ENCODE measurements at regions of chr12 and their contacts with region 1.

Region 1: DNA sequence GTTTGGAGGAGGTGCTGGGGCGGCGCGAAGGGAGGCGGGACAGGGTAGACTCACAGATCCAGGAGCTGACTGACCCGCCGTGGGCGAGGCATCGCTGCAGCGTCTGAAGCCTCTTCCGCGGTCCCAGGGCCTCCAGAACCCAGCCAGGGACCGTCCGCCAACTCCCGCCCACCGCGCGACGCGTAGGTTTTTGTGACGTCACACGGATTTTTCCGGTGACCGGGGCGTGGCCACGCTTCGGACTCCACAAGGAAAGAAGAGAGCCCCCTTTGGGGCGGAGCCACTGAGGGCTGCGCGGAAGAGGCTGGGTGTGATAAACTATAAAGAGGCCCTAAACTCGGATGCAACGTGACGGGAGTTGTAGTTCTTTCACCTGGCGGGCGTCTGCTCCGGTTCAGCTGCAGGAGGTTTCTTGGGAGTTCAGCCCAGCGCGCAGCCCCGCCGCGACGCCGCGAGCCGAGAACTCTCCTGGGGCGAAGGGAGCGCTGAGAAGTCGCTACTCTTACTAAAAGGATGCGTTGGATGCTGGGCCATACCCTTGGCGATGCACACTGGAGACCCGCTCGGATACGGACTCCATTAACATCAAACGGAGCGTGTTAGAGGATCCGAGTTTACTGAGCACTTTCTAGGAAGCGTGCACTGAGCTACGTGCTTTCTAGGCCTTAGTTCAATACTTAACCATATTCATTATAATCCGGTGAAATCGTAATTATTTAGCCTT is at the start of gene AMN1:
- DNase-seq: peak; percentile 99
- ATAC-seq: peak; percentile 97 to 99 (median 98)
- H3K4me3 ChIP-seq: peak within 1 kb of the TSS; percentile 46 to 69 (median 63)
- H3K27ac ChIP-seq: peak within 1 kb of the TSS; percentile 92 to 99 (median 96)
- H3K4me1 ChIP-seq: peaks cover 0 to 80% (median 41%) of the 10 kb centered on the region in 9 donors
- H3K27me3 ChIP-seq: no peaks in the 10 kb centered on the region
- CTCF ChIP-seq: peak in 5 of 9 donors; percentile 3 to 28 (median 19)
- total RNA-seq, gene AMN1: 12.7 to 24.9 (median 14.6) TPM

Region 2: DNA sequence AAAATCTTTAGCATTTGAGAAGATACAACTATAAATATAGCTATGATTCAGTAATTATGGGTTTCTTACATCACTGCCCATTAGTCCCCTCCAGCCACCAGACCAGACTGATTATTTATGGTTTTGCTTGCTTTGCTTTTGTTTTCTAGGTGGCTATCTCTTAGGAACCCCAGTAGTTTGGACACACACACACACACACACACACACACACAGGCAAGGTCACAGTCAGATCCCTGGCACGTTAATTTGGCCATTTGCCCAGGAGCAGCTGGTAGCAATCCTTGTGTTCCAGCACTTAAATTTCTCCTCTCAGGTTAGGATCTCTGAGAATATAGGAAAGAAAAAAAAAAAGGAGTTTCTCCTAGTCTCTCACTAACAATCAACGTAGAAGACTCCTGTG is 139.9 kb after region 1 on chr12:
- intact Hi-C with region 1: loop called in 2 of 10 experiments (anchors 2 to 5 kb)
- DNase-seq: peak; percentile 36 to 69
- ATAC-seq: peak in 6 of 8 donors; percentile 45 to 75 (median 64)
- H3K4me3 ChIP-seq: no peak overlapping the region
- H3K27ac ChIP-seq: no peak overlapping the region
- H3K4me1 ChIP-seq: peaks cover 0 to 6% (median 2%) of the 10 kb centered on the region in 9 donors
- H3K27me3 ChIP-seq: no peaks in the 10 kb centered on the region
- CTCF ChIP-seq: no peak

Region 3: DNA sequence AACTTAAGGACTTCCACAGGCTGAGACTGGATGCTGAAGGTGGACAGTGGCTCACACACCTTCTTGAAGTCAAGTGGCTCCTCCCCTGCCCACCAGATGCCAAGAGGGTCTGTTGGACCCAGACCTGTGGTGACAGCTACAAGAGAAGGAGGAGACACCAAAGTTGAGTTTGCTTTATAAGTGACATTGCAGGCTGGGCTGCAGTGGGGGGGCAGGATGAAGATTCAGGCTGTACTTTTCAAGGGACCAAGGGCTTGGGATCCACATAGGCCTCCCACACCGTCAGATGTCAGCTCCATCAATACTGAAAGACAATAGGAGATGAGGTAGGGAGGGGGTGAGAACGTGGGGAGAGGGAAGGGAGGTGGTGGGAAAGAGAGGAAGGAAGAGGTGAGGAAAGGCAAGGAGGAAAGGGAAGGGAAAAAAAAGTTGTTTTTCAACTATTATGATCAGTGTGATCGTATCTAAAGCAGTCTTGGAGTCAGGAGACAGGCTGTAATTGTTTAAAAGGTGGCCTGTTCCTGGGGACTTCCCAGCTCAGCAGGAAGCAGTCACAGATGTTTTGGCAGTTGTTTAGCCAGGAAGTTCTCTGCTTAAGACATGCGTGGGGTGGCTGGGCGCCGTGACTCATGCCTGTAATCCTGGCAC is 146.0 kb after region 1 on chr12:
- intact Hi-C with region 1: loop called in 1 of 10 experiments (anchors 2 kb)
- DNase-seq: peak; percentile 41 to 69
- ATAC-seq: peak; percentile 84 to 96 (median 92)
- H3K4me3 ChIP-seq: no peak overlapping the region
- H3K27ac ChIP-seq: peak overlapping the region; percentile 32 to 88 (median 74)
- H3K4me1 ChIP-seq: peaks cover 0 to 36% (median 17%) of the 10 kb centered on the region in 9 donors
- H3K27me3 ChIP-seq: no peaks in the 10 kb centered on the region
- CTCF ChIP-seq: no peak

Region 4: DNA sequence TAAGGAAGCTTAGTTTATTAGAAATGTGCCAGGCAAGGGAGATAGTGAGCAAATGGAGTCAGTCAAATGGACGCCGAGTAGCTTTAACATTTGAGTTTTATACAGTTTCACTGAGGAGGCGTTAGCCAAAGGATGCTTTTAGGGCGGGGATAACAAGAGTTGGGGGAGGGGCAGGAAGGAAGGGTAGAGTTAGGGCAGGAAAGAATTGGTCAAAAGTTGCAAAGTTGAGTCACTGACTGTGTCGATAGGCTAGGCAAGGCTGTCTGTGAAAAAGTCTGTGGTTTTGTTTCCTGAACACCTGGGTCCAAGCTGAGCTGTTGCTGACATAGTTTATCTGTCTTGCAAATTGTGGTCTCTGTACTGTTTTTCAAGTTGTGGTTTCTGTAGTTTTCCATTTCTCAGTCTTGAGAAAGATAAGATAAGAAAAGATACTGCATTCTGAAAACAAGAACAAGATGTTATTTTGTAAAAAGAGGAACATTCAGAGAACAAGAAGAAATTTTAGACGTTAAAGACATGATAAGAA is 167.5 kb after region 1 on chr12:
- intact Hi-C with region 1: loop called in 1 of 10 experiments (anchors 5 kb)
- DNase-seq: peak in 1 of 2 donors; percentile 38
- ATAC-seq: peak; percentile 28 to 85 (median 70)
- H3K4me3 ChIP-seq: no peak overlapping the region
- H3K27ac ChIP-seq: peak overlapping the region in 7 of 10 donors; percentile 13 to 92 (median 34)
- H3K4me1 ChIP-seq: peaks cover 2 to 55% (median 11%) of the 10 kb centered on the region in 9 donors
- H3K27me3 ChIP-seq: no peaks in the 10 kb centered on the region
- CTCF ChIP-seq: no peak